Breast epithelium (tissue), 4 donors: ENCODE measurements at regions of chr1 and their contacts with region 1.

Region 1: DNA sequence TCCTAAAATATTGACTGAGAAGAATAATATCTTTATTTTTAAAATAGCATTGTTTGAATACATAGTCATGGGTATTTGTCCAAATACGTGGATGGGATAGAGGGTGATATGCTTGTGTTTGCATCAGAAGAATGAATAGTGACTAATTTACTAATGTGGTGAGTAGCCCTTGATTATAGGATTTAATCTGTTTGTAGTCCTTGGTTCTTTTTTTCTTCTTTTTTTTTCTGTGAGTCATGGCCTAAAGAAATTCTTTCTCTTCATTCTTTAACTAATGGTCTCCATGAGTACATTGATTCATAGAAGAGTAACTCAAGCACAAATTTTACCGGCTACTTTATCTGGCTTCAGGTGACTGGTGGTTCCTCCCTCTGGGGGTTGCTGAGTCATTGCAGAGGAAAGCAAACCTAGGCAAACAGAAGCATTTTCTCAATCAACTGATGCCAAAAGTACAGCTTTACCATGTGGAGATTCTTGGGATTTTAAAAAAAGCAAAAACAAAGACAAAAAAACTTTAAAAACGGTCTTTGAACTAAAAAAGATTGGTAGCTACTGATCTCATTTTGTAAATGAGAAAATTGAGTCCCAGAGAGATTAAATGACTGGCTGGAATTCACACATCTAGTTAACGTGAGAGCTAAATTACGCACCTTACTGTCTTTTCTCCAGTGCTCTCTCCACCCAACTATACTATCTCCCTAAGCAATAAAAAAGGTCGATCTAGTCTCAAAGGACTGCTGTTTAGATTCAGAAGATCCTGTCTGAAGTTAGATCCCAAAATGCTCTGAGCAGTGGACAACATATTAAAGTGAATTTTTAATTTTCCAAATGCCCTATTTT is 40.5 kb downstream of the AK5 start:
- DNase-seq: no peak
- H3K4me3 ChIP-seq: no peak overlapping the region
- H3K27ac ChIP-seq: no peak overlapping the region
- H3K4me1 ChIP-seq: no peaks in the 10 kb centered on the region
- H3K27me3 ChIP-seq: no peaks in the 10 kb centered on the region
- CTCF ChIP-seq: no peak
- POLR2A ChIP-seq: no peak

Region 2: GRCh38 chr1:77303387-77303786 is 18.9 kb before region 1 on chr1:
- intact Hi-C with region 1: loop called (anchors 1 kb)
- DNase-seq: no peak
- H3K4me3 ChIP-seq: no peak overlapping the region
- H3K27ac ChIP-seq: no peak overlapping the region
- H3K4me1 ChIP-seq: no peaks in the 10 kb centered on the region
- H3K27me3 ChIP-seq: no peaks in the 10 kb centered on the region
- CTCF ChIP-seq: no peak
- POLR2A ChIP-seq: no peak